CD4-positive, alpha-beta T cell (primary cell): ENCODE measurements at regions of chrX and their contacts with region 1.

Region 1: GRCh38 chrX:65534450-65535292 is at the start of gene LAS1L:
- DNase-seq: peak; percentile 79 to 96 (median 86)
- ATAC-seq: peak; percentile 99
- H3K4me3 ChIP-seq: peak within 1 kb of the TSS; percentile 90
- H3K4me3 Mint-ChIP-seq: peak within 1 kb of the TSS; percentile 100
- H3K27ac ChIP-seq: peak within 1 kb of the TSS; percentile 64 to 76
- H3K27ac Mint-ChIP-seq: peak within 1 kb of the TSS; percentile 89
- H3K4me1 ChIP-seq: peaks cover 19% of the 10 kb centered on the region
- H3K4me1 Mint-ChIP-seq: peaks cover 21% of the 10 kb centered on the region
- H3K27me3 ChIP-seq: no peaks in the 10 kb centered on the region
- H3K27me3 Mint-ChIP-seq: no peaks in the 10 kb centered on the region
- CTCF ChIP-seq: no peak
- total RNA-seq, gene LAS1L: 47.4 to 51.6 TPM

Region 2: DNA sequence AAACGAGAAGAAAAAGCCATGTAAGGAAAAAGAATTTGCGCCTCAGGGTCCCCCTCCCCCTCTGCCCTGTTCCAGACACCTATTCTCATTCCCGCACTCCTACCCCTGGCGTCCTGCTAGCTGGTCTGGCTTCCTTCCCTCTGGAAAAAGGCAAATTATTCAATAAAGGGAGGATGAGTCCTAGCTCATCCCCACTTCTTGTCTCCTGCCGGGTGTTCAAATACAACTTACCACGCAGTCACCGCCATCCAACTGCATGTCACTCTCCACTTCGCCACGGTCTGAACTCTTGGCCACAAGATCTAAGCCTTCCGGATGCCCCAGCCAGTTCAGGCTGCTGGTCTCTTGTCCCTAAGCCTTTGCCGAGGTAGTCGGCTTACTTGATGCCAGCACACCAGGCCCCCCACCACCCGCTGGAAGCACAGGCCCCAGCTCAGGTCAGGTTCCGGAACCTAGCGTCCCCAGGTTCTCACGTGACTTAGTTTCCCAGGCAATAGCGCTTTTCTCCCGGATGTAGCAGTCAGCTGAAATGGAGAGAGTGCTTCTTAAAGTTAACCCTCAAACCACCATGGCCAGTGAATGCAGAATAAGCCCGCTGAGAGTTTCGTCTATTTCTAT is 1974.0 kb before region 1 on chrX:
- CTCF ChIA-PET with region 1: no interaction called
- POLR2A ChIA-PET with region 1: no interaction called
- intact Hi-C with region 1: loop called in 1 of 2 experiments (anchors 5 kb)
- DNase-seq: peak; percentile 7 to 76 (median 31)
- ATAC-seq: peak; percentile 90
- H3K4me3 ChIP-seq: peak overlapping the region; percentile 84
- H3K4me3 Mint-ChIP-seq: peak overlapping the region; percentile 96
- H3K27ac ChIP-seq: peak overlapping the region; percentile 13 to 62
- H3K27ac Mint-ChIP-seq: peak overlapping the region; percentile 93
- H3K4me1 ChIP-seq: no peaks in the 10 kb centered on the region
- H3K4me1 Mint-ChIP-seq: peaks cover 25% of the 10 kb centered on the region
- H3K27me3 ChIP-seq: no peaks in the 10 kb centered on the region
- H3K27me3 Mint-ChIP-seq: no peaks in the 10 kb centered on the region
- CTCF ChIP-seq: no peak

Region 3: GRCh38 chrX:63754860-63755582 is 1779.7 kb before region 1 on chrX:
- CTCF ChIA-PET with region 1: no interaction called
- POLR2A ChIA-PET with region 1: no interaction called
- intact Hi-C with region 1: loop called (anchors 10 kb)
- DNase-seq: peak; percentile 70 to 94 (median 83)
- ATAC-seq: peak; percentile 92
- H3K4me3 ChIP-seq: peak overlapping the region; percentile 93
- H3K4me3 Mint-ChIP-seq: peak overlapping the region; percentile 99
- H3K27ac ChIP-seq: peak overlapping the region; percentile 70 to 80
- H3K27ac Mint-ChIP-seq: peak overlapping the region; percentile 97
- H3K4me1 ChIP-seq: peaks cover 11% of the 10 kb centered on the region
- H3K4me1 Mint-ChIP-seq: peaks cover 28% of the 10 kb centered on the region
- H3K27me3 ChIP-seq: no peaks in the 10 kb centered on the region
- H3K27me3 Mint-ChIP-seq: no peaks in the 10 kb centered on the region
- CTCF ChIP-seq: no peak

Region 4: GRCh38 chrX:64394874-64395567 is 1139.7 kb before region 1 on chrX and contains the start of gene MTMR8:
- CTCF ChIA-PET with region 1: no interaction called
- POLR2A ChIA-PET with region 1: interaction called, 3 read pairs
- intact Hi-C with region 1: loop called in 1 of 2 experiments (anchors 5 kb)
- DNase-seq: peak; percentile 59 to 89 (median 73)
- ATAC-seq: peak; percentile 95
- H3K4me3 ChIP-seq: peak within 1 kb of the TSS; percentile 85
- H3K4me3 Mint-ChIP-seq: peak within 1 kb of the TSS; percentile 90
- H3K27ac ChIP-seq: peak within 1 kb of the TSS; percentile 21 to 22
- H3K27ac Mint-ChIP-seq: peak within 1 kb of the TSS; percentile 85
- H3K4me1 ChIP-seq: peaks cover 17% of the 10 kb centered on the region
- H3K4me1 Mint-ChIP-seq: peaks cover 46% of the 10 kb centered on the region
- H3K27me3 ChIP-seq: no peaks in the 10 kb centered on the region
- H3K27me3 Mint-ChIP-seq: no peaks in the 10 kb centered on the region
- CTCF ChIP-seq: no peak
- total RNA-seq, gene MTMR8: 2.3 to 3.1 TPM

Region 5: GRCh38 chrX:64975989-64976672 is 558.5 kb before region 1 on chrX and contains the start of gene ZC4H2:
- CTCF ChIA-PET with region 1: no interaction called
- POLR2A ChIA-PET with region 1: interaction called, 5 read pairs
- intact Hi-C with region 1: loop called in 1 of 2 experiments (anchors 2 kb)
- DNase-seq: peak; percentile 34 to 85 (median 59)
- ATAC-seq: peak; percentile 96
- H3K4me3 ChIP-seq: peak within 1 kb of the TSS; percentile 74
- H3K4me3 Mint-ChIP-seq: peak within 1 kb of the TSS; percentile 98
- H3K27ac ChIP-seq: no peak within 1 kb of the TSS
- H3K27ac Mint-ChIP-seq: peak within 1 kb of the TSS; percentile 81
- H3K4me1 ChIP-seq: peaks cover 14% of the 10 kb centered on the region
- H3K4me1 Mint-ChIP-seq: peaks cover 28% of the 10 kb centered on the region
- H3K27me3 ChIP-seq: no peaks in the 10 kb centered on the region
- H3K27me3 Mint-ChIP-seq: no peaks in the 10 kb centered on the region
- CTCF ChIP-seq: no peak
- total RNA-seq, gene ZC4H2: 7.8 to 8.7 TPM

Region 6: GRCh38 chrX:65034668-65035445 is 499.8 kb before region 1 on chrX:
- CTCF ChIA-PET with region 1: no interaction called
- POLR2A ChIA-PET with region 1: interaction called, 5 read pairs
- intact Hi-C with region 1: loop called in 1 of 2 experiments (anchors 5 kb)
- DNase-seq: peak; percentile 61 to 92 (median 78)
- ATAC-seq: peak; percentile 87
- H3K4me3 ChIP-seq: peak within 1 kb of the TSS; percentile 71
- H3K4me3 Mint-ChIP-seq: peak within 1 kb of the TSS; percentile 98
- H3K27ac ChIP-seq: peak within 1 kb of the TSS; percentile 52 to 59
- H3K27ac Mint-ChIP-seq: peak within 1 kb of the TSS; percentile 98
- H3K4me1 ChIP-seq: peaks cover 10% of the 10 kb centered on the region
- H3K4me1 Mint-ChIP-seq: peaks cover 42% of the 10 kb centered on the region
- H3K27me3 ChIP-seq: no peaks in the 10 kb centered on the region
- H3K27me3 Mint-ChIP-seq: no peaks in the 10 kb centered on the region
- CTCF ChIP-seq: peak; percentile 65